ENCODE measurements at regions of chr12 and their contacts with region 1.

Region 1: GRCh38 chr12:98490501-98491453 is 24.6 kb upstream of the TMPO start:
- DNase-seq: peak; percentile 91
- H3K4me3 Mint-ChIP-seq: peak overlapping the region; percentile 59
- H3K27ac Mint-ChIP-seq: peak overlapping the region; percentile 87
- H3K4me1 Mint-ChIP-seq: peaks cover 4% of the 10 kb centered on the region
- H3K27me3 Mint-ChIP-seq: no peaks in the 10 kb centered on the region

Region 2: GRCh38 chr12:98503592-98504367 is 13.0 kb after region 1 on chr12:
- CTCF ChIA-PET with region 1: interaction called, 23 read pairs
- intact Hi-C with region 1: loop called (anchors 1 kb)
- DNase-seq: peak; percentile 97
- H3K4me3 Mint-ChIP-seq: peak overlapping the region; percentile 97
- H3K27ac Mint-ChIP-seq: peak overlapping the region; percentile 100
- H3K4me1 Mint-ChIP-seq: peaks cover 16% of the 10 kb centered on the region
- H3K27me3 Mint-ChIP-seq: peaks cover 8% of the 10 kb centered on the region

Region 3: DNA sequence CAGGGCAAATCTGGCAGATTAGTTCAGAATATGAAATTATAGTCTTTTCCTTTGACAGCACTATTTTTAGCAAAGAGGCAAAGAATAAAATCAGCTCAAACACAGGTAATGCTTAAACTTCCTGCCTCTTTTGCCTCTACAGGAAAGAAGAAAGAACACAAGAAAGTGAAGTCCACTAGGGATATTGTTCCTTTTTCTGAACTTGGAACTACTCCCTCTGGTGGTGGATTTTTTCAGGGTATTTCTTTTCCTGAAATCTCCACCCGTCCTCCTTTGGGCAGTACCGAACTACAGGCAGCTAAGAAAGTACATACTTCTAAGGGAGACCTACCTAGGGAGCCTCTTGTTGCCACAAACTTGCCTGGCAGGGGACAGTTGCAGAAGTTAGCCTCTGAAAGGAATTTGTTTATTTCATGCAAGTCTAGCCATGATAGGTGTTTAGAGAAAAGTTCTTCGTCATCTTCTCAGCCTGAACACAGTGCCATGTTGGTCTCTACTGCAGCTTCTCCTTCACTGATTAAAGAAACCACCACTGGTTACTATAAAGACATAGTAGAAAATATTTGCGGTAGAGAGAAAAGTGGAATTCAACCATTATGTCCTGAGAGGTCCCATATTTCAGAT is 42.0 kb after region 1 on chr12:
- CTCF ChIA-PET with region 1: interaction called, 29 read pairs
- intact Hi-C with region 1: loop called (anchors 1 kb)
- DNase-seq: no peak
- H3K4me3 Mint-ChIP-seq: no peak overlapping the region
- H3K27ac Mint-ChIP-seq: no peak overlapping the region
- H3K4me1 Mint-ChIP-seq: peaks cover 14% of the 10 kb centered on the region
- H3K27me3 Mint-ChIP-seq: no peaks in the 10 kb centered on the region

Measured in activated naive CD4-positive, alpha-beta T cell treated with anti-CD3 and anti-CD28 coated beads for 36 hours (primary cell).